Ascending aorta (tissue), 2 donors: ENCODE measurements at regions of chr12 and their contacts with region 1.

Region 1: GRCh38 chr12:29782285-29782870 is 1.4 kb downstream of the TMTC1 start:
- DNase-seq: peak in 1 of 2 donors; percentile 68
- H3K4me3 ChIP-seq: peak overlapping the region; percentile 75 to 94
- H3K27ac ChIP-seq: peak overlapping the region; percentile 87 to 91
- H3K4me1 ChIP-seq: peaks cover 0 to 20% of the 10 kb centered on the region in 2 donors
- H3K27me3 ChIP-seq: no peaks in the 10 kb centered on the region
- CTCF ChIP-seq: no peak

Region 2: DNA sequence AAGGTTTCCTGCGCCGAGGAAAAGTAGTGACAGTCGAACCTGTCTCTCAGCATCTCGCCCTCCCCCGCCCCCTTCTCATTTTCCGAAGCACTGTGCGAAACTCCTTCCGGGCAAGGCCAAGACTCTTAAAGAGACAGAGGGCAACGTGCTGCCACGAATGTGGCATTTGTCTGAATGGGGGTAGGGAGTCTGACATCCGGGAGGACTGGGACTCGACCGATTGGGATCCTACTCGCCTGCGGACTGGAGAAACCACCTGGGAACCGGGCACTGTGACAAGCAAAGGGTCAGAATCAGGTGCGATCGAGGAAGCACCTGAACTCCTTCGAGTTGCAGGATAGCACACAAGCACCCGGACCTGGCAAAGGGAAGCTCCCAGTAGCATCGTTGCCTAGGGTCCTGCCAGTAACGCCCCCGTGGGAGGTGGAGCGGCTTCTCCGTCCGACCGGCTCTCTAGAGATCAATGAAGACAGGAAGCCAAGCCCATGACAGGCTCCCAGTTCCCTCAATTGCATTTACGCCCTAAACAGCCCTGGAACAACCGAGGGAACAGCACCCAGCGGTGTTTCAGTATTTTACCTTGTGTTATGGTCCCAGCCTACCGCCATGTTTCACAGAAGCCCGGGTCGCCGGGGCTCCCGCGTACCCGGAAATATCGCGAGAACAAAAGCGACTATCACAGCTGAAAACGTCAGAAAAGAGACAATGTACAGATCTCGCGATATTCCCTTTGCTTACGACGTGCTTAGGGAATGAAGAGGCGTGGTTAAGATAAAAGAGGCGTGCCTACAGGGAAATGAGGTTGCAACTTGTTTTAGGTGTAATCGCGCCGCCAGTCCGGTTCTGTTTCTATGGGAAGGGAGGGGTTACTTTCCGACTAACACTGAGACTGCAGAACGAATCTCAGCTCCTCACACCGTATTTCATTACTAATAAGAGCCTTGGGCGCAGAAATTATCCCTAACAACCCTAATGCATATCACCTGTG is 401.5 kb before region 1 on chr12 and contains the start of gene ERGIC2:
- intact Hi-C with region 1: loop called (anchors 10 kb)
- DNase-seq: peak; percentile 83 to 97
- H3K4me3 ChIP-seq: peak within 1 kb of the TSS; percentile 76 to 88
- H3K27ac ChIP-seq: peak within 1 kb of the TSS; percentile 75 to 86
- H3K4me1 ChIP-seq: peaks cover 0 to 9% of the 10 kb centered on the region in 2 donors
- H3K27me3 ChIP-seq: no peaks in the 10 kb centered on the region
- CTCF ChIP-seq: no peak
- total RNA-seq, gene ERGIC2: 12.5 TPM

Region 3: GRCh38 chr12:29611906-29612305 is 170.5 kb before region 1 on chr12:
- intact Hi-C with region 1: loop called (anchors 2 kb)
- DNase-seq: peak in 1 of 2 donors; percentile 67
- H3K4me3 ChIP-seq: no peak overlapping the region
- H3K27ac ChIP-seq: peak overlapping the region; percentile 24 to 32
- H3K4me1 ChIP-seq: peaks cover 0 to 39% of the 10 kb centered on the region in 2 donors
- H3K27me3 ChIP-seq: no peaks in the 10 kb centered on the region
- CTCF ChIP-seq: no peak

Region 4: DNA sequence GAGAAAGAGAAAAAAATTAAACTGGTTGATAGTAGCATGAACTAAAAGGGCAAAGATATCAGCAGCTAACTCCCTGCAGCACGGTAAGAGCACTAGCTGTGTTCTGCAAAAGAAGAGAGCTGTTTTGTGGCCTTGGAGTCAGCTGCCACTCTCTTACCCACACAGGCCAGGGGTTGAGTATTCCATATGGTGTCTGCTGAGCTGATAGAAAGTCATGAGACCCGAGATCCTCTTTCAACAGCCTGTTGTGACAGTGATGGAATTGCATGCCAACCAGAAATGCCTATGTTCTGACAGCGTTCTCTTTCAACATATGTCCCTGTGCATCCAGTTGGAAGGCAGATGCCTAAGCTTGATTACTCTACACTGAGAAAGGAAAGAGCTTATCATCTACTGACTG is 38.6 kb before region 1 on chr12:
- intact Hi-C with region 1: loop called (anchors 5 kb)
- DNase-seq: no peak
- H3K4me3 ChIP-seq: no peak overlapping the region
- H3K27ac ChIP-seq: peak overlapping the region; percentile 44 to 74
- H3K4me1 ChIP-seq: peaks cover 3 to 21% of the 10 kb centered on the region in 2 donors
- H3K27me3 ChIP-seq: no peaks in the 10 kb centered on the region
- CTCF ChIP-seq: no peak

Region 5: DNA sequence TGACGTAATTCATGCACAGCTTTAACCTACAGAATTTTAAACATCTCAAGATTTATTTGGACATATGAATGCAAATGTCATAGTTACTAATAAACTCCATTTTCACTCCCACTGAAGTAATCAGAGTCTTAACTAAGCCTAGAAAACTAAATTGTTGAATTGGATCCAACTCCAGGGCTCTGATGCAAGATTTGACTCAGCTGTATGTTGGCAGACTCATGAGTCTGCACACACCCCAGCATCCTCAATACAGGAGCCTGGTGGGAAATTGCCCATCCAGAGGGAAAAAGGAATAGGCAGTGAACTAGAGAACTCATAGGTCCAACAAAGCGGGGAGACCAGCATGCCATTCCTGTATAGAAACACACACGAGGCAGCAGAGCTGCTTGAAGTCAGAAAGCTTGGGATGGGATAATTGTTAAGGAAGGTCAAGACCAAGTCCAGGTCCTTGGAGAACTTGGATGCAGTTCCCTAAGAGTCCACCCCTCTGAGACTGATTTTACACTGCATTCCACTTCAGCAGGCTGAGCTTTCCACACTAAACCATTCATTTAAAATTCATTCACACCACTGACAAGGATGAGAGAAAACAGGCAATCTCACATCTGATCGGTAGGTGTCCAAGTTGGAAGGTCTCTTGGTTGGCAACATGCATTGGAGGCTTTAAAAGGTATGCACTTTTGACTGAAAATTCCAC is 13.1 kb before region 1 on chr12:
- intact Hi-C with region 1: no loop called
- DNase-seq: peak in 1 of 2 donors; percentile 70
- H3K4me3 ChIP-seq: no peak overlapping the region
- H3K27ac ChIP-seq: no peak overlapping the region
- H3K4me1 ChIP-seq: peaks cover 0 to 15% of the 10 kb centered on the region in 2 donors
- H3K27me3 ChIP-seq: no peaks in the 10 kb centered on the region
- CTCF ChIP-seq: no peak

Region 6: GRCh38 chr12:29818916-29819623 is 36.7 kb after region 1 on chr12:
- intact Hi-C with region 1: no loop called
- DNase-seq: no peak
- H3K4me3 ChIP-seq: no peak overlapping the region
- H3K27ac ChIP-seq: no peak overlapping the region
- H3K4me1 ChIP-seq: no peaks in the 10 kb centered on the region
- H3K27me3 ChIP-seq: no peaks in the 10 kb centered on the region
- CTCF ChIP-seq: no peak

Region 7: GRCh38 chr12:30754709-30755394 is 972.5 kb after region 1 on chr12 and contains the start of gene CAPRIN2:
- intact Hi-C with region 1: loop called (anchors 5 kb)
- DNase-seq: peak; percentile 82 to 98
- H3K4me3 ChIP-seq: peak within 1 kb of the TSS; percentile 87 to 100
- H3K27ac ChIP-seq: peak within 1 kb of the TSS; percentile 83 to 84
- H3K4me1 ChIP-seq: peaks cover 0 to 6% of the 10 kb centered on the region in 2 donors
- H3K27me3 ChIP-seq: no peaks in the 10 kb centered on the region
- CTCF ChIP-seq: peak; percentile 30 to 49 (median 44)
- total RNA-seq, gene CAPRIN2: 20.6 TPM

Region 8: GRCh38 chr12:31300341-31300740 is 1518.0 kb after region 1 on chr12:
- intact Hi-C with region 1: no loop called
- DNase-seq: no peak
- H3K4me3 ChIP-seq: no peak overlapping the region
- H3K27ac ChIP-seq: no peak overlapping the region
- H3K4me1 ChIP-seq: no peaks in the 10 kb centered on the region
- H3K27me3 ChIP-seq: no peaks in the 10 kb centered on the region
- CTCF ChIP-seq: no peak